B cell (primary cell): ENCODE measurements at regions of chr2 and their contacts with region 1.

Region 1: GRCh38 chr2:133886735-133887660 is 318.7 kb upstream of the NCKAP5 start:
- DNase-seq: peak; percentile 79
- ATAC-seq: peak; percentile 75
- H3K4me3 ChIP-seq: no peak overlapping the region
- H3K4me3 Mint-ChIP-seq: no peak overlapping the region
- H3K27ac ChIP-seq: no peak overlapping the region
- H3K27ac Mint-ChIP-seq: no peak overlapping the region
- H3K4me1 ChIP-seq: peaks cover 7 to 10% of the 10 kb centered on the region in 2 donors
- H3K4me1 Mint-ChIP-seq: peaks cover 13% of the 10 kb centered on the region
- H3K27me3 ChIP-seq: peaks cover 0 to 3% (median 0%) of the 10 kb centered on the region in 4 experiments
- H3K27me3 Mint-ChIP-seq: no peaks in the 10 kb centered on the region
- CTCF ChIP-seq: peak; percentile 85

Region 2: GRCh38 chr2:133561045-133561852 is 325.7 kb before region 1 on chr2:
- CTCF ChIA-PET with region 1: no interaction called
- POLR2A ChIA-PET with region 1: no interaction called
- intact Hi-C with region 1: no loop called
- DNase-seq: no peak
- ATAC-seq: no peak
- H3K4me3 ChIP-seq: no peak overlapping the region
- H3K4me3 Mint-ChIP-seq: no peak overlapping the region
- H3K27ac ChIP-seq: no peak overlapping the region
- H3K27ac Mint-ChIP-seq: no peak overlapping the region
- H3K4me1 ChIP-seq: no peaks in the 10 kb centered on the region
- H3K4me1 Mint-ChIP-seq: no peaks in the 10 kb centered on the region
- H3K27me3 ChIP-seq: no peaks in the 10 kb centered on the region
- H3K27me3 Mint-ChIP-seq: peaks cover 21% of the 10 kb centered on the region
- CTCF ChIP-seq: peak; percentile 28

Region 3: DNA sequence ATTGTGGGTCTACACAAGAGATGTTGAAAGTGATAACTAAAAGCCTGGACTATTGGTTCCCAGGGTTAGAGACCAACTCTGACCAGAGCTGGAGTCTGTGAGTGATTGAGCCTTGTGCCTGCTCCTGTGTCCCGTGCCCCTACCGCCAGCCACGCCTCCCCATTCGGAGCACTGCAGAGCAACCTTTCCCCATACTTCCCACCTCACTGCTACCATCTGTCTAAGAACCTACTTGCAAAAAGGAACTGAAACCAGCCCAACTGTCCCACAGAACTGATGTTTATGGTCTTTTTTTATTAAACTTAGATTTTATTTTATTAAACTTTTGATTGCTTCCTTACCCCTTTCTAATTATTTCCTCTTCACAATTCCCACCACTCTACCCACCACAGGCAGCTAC is 66.5 kb after region 1 on chr2:
- CTCF ChIA-PET with region 1: interaction called, 14 read pairs
- POLR2A ChIA-PET with region 1: no interaction called
- intact Hi-C with region 1: loop called (anchors 5 kb)
- DNase-seq: peak; percentile 83
- ATAC-seq: peak; percentile 88
- H3K4me3 ChIP-seq: peak overlapping the region in 1 of 5 experiments; percentile 18
- H3K4me3 Mint-ChIP-seq: peak overlapping the region; percentile 64
- H3K27ac ChIP-seq: peak overlapping the region; percentile 63 to 73
- H3K27ac Mint-ChIP-seq: peak overlapping the region; percentile 85
- H3K4me1 ChIP-seq: peaks cover 75 to 76% of the 10 kb centered on the region in 2 donors
- H3K4me1 Mint-ChIP-seq: peaks cover 74% of the 10 kb centered on the region
- H3K27me3 ChIP-seq: no peaks in the 10 kb centered on the region
- H3K27me3 Mint-ChIP-seq: no peaks in the 10 kb centered on the region
- CTCF ChIP-seq: no peak

Region 4: GRCh38 chr2:134207564-134208209 is 320.7 kb after region 1 on chr2:
- CTCF ChIA-PET with region 1: interaction called, 88 read pairs
- POLR2A ChIA-PET with region 1: no interaction called
- intact Hi-C with region 1: loop called (anchors 5 kb)
- DNase-seq: peak; percentile 68
- ATAC-seq: peak; percentile 82
- H3K4me3 ChIP-seq: no peak overlapping the region
- H3K4me3 Mint-ChIP-seq: no peak overlapping the region
- H3K27ac ChIP-seq: peak overlapping the region in 1 of 2 donors; percentile 64
- H3K27ac Mint-ChIP-seq: peak overlapping the region; percentile 69
- H3K4me1 ChIP-seq: peaks cover 49 to 53% of the 10 kb centered on the region in 2 donors
- H3K4me1 Mint-ChIP-seq: peaks cover 12% of the 10 kb centered on the region
- H3K27me3 ChIP-seq: no peaks in the 10 kb centered on the region
- H3K27me3 Mint-ChIP-seq: no peaks in the 10 kb centered on the region
- CTCF ChIP-seq: peak; percentile 75

Region 5: GRCh38 chr2:134261398-134262131 is 374.6 kb after region 1 on chr2:
- CTCF ChIA-PET with region 1: interaction called, 13 read pairs
- POLR2A ChIA-PET with region 1: no interaction called
- intact Hi-C with region 1: no loop called
- DNase-seq: peak; percentile 78
- ATAC-seq: peak; percentile 55
- H3K4me3 ChIP-seq: peak overlapping the region in 1 of 5 experiments; percentile 22
- H3K4me3 Mint-ChIP-seq: peak overlapping the region; percentile 80
- H3K27ac ChIP-seq: peak overlapping the region; percentile 94 to 96
- H3K27ac Mint-ChIP-seq: peak overlapping the region; percentile 99
- H3K4me1 ChIP-seq: peaks cover 92 to 94% of the 10 kb centered on the region in 2 donors
- H3K4me1 Mint-ChIP-seq: peaks cover 86% of the 10 kb centered on the region
- H3K27me3 ChIP-seq: no peaks in the 10 kb centered on the region
- H3K27me3 Mint-ChIP-seq: no peaks in the 10 kb centered on the region
- CTCF ChIP-seq: no peak

Region 6: GRCh38 chr2:134314681-134315368 is 427.8 kb after region 1 on chr2:
- CTCF ChIA-PET with region 1: no interaction called
- POLR2A ChIA-PET with region 1: no interaction called
- intact Hi-C with region 1: no loop called
- DNase-seq: no peak
- ATAC-seq: no peak
- H3K4me3 ChIP-seq: no peak overlapping the region
- H3K4me3 Mint-ChIP-seq: no peak overlapping the region
- H3K27ac ChIP-seq: peak overlapping the region in 1 of 2 donors; percentile 42
- H3K27ac Mint-ChIP-seq: peak overlapping the region; percentile 58
- H3K4me1 ChIP-seq: peaks cover 55 to 57% of the 10 kb centered on the region in 2 donors
- H3K4me1 Mint-ChIP-seq: peaks cover 81% of the 10 kb centered on the region
- H3K27me3 ChIP-seq: no peaks in the 10 kb centered on the region
- H3K27me3 Mint-ChIP-seq: no peaks in the 10 kb centered on the region
- CTCF ChIP-seq: no peak

Region 7: GRCh38 chr2:134420259-134420658 is 533.3 kb after region 1 on chr2:
- CTCF ChIA-PET with region 1: interaction called, 232 read pairs
- POLR2A ChIA-PET with region 1: no interaction called
- intact Hi-C with region 1: no loop called
- DNase-seq: no peak
- ATAC-seq: no peak
- H3K4me3 ChIP-seq: no peak overlapping the region
- H3K4me3 Mint-ChIP-seq: no peak overlapping the region
- H3K27ac ChIP-seq: no peak overlapping the region
- H3K27ac Mint-ChIP-seq: no peak overlapping the region
- H3K4me1 ChIP-seq: no peaks in the 10 kb centered on the region
- H3K4me1 Mint-ChIP-seq: no peaks in the 10 kb centered on the region
- H3K27me3 ChIP-seq: no peaks in the 10 kb centered on the region
- H3K27me3 Mint-ChIP-seq: no peaks in the 10 kb centered on the region
- CTCF ChIP-seq: no peak

Region 8: DNA sequence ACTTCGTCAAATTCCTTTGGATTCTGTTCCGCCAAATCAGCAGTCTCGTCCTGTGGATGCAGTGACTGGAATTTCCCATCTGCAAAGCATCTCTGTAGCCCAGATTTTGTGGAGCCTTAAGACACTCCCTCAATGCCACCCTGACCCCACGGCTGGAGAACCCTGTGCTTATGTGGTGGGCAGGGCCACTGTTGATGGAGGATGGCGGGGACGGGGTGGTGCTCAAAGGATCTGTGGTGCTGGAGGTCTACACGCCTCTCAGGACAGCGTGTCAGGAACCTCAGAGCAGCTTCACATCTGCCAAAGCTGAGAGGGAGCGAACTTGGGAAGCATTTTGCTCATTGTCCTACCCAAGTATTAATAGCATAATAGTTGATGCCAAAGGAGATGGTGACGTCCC is 567.0 kb after region 1 on chr2:
- CTCF ChIA-PET with region 1: interaction called, 22 read pairs
- POLR2A ChIA-PET with region 1: no interaction called
- intact Hi-C with region 1: loop called (anchors 1 kb)
- DNase-seq: no peak
- ATAC-seq: no peak
- H3K4me3 ChIP-seq: no peak overlapping the region
- H3K4me3 Mint-ChIP-seq: no peak overlapping the region
- H3K27ac ChIP-seq: no peak overlapping the region
- H3K27ac Mint-ChIP-seq: no peak overlapping the region
- H3K4me1 ChIP-seq: no peaks in the 10 kb centered on the region
- H3K4me1 Mint-ChIP-seq: no peaks in the 10 kb centered on the region
- H3K27me3 ChIP-seq: no peaks in the 10 kb centered on the region
- H3K27me3 Mint-ChIP-seq: no peaks in the 10 kb centered on the region
- CTCF ChIP-seq: no peak

Region 9: GRCh38 chr2:134508391-134508790 is 621.4 kb after region 1 on chr2:
- CTCF ChIA-PET with region 1: no interaction called
- POLR2A ChIA-PET with region 1: no interaction called
- intact Hi-C with region 1: no loop called
- DNase-seq: no peak
- ATAC-seq: no peak
- H3K4me3 ChIP-seq: no peak overlapping the region
- H3K4me3 Mint-ChIP-seq: no peak overlapping the region
- H3K27ac ChIP-seq: no peak overlapping the region
- H3K27ac Mint-ChIP-seq: no peak overlapping the region
- H3K4me1 ChIP-seq: no peaks in the 10 kb centered on the region
- H3K4me1 Mint-ChIP-seq: no peaks in the 10 kb centered on the region
- H3K27me3 ChIP-seq: no peaks in the 10 kb centered on the region
- H3K27me3 Mint-ChIP-seq: no peaks in the 10 kb centered on the region
- CTCF ChIP-seq: no peak